Vagina (tissue), 2 donors: ENCODE measurements at regions of chr1 and their contacts with region 1.

Region 1: DNA sequence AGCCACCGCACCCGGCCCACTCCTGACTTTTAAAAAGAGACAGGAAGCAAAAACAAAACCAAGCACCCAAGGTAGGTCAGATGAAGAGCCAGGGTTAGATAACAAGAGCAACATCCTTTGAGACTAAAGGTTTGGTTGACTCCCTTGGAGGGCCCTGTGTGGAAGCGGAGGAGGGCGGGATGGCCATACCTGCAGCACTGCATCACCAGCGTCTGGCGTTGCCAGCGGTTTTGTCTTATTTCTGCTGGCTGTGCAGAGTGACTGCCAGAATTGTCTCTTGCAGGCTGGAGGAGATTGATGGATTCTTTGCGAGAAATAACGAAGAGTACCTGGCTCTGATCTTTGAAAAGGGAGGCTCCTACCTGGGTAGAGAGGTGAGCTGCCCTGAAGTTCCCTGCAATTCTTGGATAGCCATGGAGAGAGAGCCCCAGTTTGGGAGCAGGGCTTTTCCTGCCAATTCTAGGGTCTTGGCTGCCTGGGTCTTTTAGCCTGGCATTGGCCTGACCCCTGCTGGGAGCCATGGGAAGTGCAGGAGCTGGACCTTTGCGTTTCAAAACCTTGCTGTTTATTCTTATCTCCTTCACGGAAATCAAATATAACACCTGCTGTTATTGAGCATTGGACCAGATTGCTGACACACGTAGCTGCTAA is 24.0 kb downstream of the QSOX1 start:
- DNase-seq: no peak
- H3K4me3 ChIP-seq: no peak overlapping the region
- H3K27ac ChIP-seq: no peak overlapping the region
- H3K4me1 ChIP-seq: peaks cover 10% of the 10 kb centered on the region
- H3K27me3 ChIP-seq: no peaks in the 10 kb centered on the region
- CTCF ChIP-seq: peak; percentile 84 to 93 (median 90)
- POLR2A ChIP-seq: no peak

Region 2: GRCh38 chr1:179984942-179985341 is 193.7 kb before region 1 on chr1:
- intact Hi-C with region 1: no loop called
- DNase-seq: no peak
- H3K4me3 ChIP-seq: no peak overlapping the region
- H3K27ac ChIP-seq: no peak overlapping the region
- H3K4me1 ChIP-seq: no peaks in the 10 kb centered on the region
- H3K27me3 ChIP-seq: no peaks in the 10 kb centered on the region
- CTCF ChIP-seq: no peak
- POLR2A ChIP-seq: no peak

Region 3: DNA sequence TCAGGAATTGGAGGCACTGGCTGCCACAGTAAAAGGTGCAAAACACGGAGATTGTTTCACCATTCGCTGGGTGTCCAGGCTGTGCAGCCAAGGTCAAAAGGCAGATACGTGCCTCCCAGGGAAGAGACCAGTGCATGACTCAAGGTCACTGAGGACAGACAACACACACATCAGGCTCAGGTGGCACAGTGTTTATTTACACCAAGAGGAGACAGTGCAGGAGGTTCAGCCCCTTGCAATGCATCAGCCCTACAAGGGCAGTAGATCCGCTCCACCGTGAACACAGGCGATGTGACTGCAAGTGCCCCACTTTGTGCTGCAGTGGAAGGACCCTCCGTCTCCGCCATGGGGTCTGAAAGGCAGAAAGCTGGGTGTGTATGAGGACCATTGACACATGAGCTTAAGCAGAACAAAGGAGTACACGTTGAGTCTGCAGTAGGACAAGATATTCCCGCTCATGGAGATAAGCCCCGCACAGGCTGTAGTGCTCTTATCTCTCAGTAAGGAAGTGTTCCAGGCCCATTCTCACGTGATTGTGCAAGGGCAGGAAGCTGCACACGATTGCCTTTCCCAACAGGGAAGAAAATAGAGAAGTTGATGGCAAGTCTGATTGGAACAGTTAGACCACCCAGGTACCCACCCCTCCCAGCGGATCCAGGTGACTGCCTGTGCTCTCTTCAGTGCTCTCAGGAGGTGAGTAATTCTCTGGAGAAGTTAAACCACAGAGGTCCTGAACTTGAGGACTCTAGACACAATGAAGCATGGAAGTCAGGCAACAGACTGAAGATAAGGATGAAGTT is 61.5 kb before region 1 on chr1:
- intact Hi-C with region 1: loop called (anchors 10 kb)
- DNase-seq: no peak
- H3K4me3 ChIP-seq: no peak overlapping the region
- H3K27ac ChIP-seq: no peak overlapping the region
- H3K4me1 ChIP-seq: peaks cover 25% of the 10 kb centered on the region
- H3K27me3 ChIP-seq: no peaks in the 10 kb centered on the region
- CTCF ChIP-seq: no peak
- POLR2A ChIP-seq: no peak